BJ (cell line): ENCODE measurements at regions of chr6 and their contacts with region 1.

Region 1: DNA sequence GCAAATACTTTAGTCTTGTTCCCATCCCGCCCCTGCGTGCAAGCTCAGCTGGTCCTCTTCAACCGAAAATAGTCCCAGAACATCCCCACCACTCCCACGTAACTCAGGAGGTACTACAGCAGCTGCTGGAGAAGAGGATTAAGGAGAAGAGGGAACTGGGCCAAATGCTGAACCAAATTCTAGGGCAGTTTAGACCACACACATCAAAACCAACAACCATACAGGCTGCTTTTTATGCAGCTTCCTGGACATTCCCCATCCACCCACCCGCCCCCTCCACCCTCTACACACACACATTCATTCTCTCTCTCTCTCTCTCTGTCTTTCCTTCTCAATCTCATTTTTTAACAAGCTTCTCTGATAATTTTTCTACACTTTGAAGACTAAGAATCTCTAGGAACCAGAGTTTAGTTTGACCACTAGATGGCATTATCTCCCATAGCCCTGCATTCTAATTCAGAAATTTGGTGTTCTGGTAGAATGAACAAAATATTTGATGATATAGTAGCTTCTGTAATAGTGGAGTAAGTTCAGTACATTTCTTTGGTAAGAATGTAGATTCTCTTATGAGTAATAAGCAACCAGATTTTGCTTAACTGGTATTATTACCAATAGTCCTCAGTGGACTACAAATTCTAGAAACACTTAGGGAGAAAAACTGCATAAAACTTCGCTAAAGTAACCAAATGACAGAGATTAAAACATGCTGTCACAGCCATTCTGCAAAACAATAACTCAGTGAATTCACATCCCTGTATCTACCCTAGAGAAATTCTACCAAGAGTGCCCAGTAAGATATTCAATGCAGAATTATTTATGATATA is 52.1 kb upstream of the BEND6 start:
- DNase-seq: no peak
- H3K4me3 ChIP-seq: no peak overlapping the region
- H3K27me3 ChIP-seq: no peaks in the 10 kb centered on the region
- CTCF ChIP-seq: peak; percentile 69

Region 2: GRCh38 chr6:56890683-56891429 is 12.0 kb before region 1 on chr6:
- CTCF ChIA-PET with region 1: interaction called, 12 read pairs
- POLR2A ChIA-PET with region 1: no interaction called
- DNase-seq: peak; percentile 79
- H3K4me3 ChIP-seq: no peak overlapping the region
- H3K27me3 ChIP-seq: no peaks in the 10 kb centered on the region
- CTCF ChIP-seq: no peak

Region 3: DNA sequence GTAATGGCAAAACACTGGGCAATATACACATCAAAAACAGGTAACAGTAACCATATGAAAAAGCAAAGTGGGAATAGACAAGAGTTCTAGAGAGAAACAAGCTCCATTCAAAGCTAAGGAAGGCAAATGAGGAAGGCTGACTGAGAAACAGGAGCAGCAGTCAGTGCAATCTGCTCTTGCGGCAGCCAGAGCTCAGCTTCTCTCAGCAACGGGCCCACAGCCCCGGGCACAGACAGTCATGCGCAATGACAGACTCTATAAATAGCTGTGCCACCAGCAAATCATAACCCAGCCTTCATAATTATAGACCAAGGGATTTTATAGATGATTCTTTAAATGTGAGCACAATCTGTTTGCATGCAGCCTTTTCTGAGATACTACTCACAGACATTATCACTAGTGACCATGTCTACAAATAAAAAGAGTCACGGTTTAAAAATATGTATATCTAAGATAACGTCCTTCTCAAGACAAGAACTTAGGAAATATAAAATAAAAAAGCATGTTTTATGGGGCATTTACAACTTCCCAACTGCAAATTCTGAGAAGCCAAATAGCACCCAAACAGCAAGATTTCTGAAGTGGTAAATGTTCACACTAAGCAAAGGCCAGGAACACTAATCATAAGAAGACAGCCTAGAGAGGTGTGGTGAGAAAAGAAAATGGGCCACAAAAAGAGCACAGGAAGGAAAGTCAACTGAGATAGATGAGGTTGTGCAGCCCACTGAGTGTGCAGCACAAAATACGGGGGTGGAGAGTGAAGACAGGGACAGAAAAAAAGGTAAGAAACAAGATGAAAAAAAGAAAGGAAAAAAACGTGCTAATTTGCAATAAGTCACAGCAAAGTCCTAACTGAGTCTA is 12.2 kb after region 1 on chr6:
- CTCF ChIA-PET with region 1: interaction called, 34 read pairs
- POLR2A ChIA-PET with region 1: no interaction called
- DNase-seq: no peak
- H3K4me3 ChIP-seq: no peak overlapping the region
- H3K27me3 ChIP-seq: no peaks in the 10 kb centered on the region
- CTCF ChIP-seq: no peak

Region 4: DNA sequence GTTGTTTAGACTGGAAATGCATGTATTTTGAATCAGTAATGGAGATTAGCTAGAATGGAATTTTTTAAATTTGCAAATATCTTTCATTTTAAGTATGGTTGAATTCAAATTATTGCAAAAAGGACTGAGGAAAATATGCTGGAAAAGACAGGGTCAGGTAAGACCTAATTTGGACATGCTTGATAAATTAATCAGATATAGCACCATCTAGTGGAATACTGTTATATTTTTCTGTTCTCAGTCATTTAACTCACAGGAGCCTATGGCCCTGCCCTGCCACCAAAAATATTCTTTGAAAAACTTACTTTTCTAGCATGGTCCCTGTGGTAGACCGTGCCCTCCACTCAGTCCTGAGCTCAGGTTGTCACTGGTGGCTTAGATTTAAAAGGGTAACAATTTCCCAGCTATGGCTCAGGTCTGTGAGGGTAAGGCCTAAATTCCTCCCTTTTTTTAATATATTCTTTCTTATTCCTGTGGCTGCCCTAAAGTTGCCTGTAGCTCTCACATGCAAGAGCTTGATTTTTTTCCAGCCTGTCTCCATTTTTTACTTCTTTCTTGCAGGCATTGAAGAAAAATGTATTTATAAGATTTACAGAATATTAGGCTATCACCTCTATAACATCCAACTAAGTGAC is 118.3 kb after region 1 on chr6:
- CTCF ChIA-PET with region 1: interaction called, 71 read pairs
- POLR2A ChIA-PET with region 1: no interaction called
- DNase-seq: peak; percentile 19
- H3K4me3 ChIP-seq: no peak overlapping the region
- H3K27me3 ChIP-seq: no peaks in the 10 kb centered on the region
- CTCF ChIP-seq: peak; percentile 43

Region 5: DNA sequence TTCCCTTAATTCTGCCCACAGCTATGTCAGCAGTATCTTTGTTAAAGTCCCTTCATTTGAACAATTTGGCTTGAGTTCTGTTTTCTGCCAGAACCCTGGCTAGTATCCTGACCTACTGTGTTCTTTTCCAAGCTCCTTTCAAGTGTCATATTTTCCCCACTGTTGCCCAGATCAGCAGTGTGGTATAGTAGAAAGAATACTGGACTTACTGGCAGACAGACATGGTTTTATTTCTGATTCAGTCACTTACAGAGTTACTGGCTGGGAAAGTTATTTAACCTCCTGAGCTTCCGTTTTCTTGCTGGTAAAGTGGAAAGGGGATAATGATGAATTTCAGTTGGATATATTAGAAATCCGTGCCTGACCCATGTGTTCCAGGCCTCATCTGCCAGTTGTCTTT is 359.1 kb after region 1 on chr6:
- CTCF ChIA-PET with region 1: no interaction called
- POLR2A ChIA-PET with region 1: no interaction called
- DNase-seq: no peak
- H3K4me3 ChIP-seq: no peak overlapping the region
- H3K27me3 ChIP-seq: no peaks in the 10 kb centered on the region
- CTCF ChIP-seq: no peak